OCI-LY7 (cell line): ENCODE measurements at regions of chr20 and their contacts with region 1.

Region 1: DNA sequence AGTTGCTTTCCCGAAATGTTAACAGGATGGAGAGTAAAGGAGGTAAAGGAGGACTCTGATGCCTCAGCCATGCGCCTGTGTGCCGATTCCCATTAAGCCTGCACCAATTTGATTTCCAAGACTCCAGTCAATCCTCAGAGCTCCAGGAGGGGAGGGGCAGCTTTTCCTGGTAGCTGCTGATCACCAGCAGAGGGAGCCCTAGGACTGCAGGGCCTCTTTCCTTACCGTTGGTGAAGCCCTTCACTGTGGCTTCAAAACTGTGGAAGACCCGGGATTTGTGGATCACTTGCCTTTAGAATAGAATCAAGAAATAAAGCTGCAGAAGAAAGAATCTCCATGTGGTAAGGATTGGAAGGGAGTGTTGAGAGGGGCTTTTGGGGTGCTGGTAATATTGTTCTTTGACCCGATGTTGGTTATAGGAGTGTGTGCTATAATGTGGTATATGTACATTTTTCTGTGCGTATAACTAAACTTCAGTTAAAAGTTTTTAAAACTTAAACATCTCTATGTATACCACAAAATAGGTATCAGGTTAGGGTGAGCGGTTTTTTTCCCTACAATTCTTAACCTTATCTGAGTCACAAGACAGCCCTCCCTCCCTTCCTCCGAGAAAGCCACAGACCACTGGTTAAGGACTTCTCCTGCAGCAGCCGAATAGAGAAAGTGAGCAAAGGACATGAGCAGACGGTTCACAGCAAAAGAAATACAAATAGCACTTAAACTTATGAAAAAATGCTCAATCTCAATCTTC is 6.9 kb upstream of the OSER1 start:
- DNase-seq: peak; percentile 68
- H3K4me3 ChIP-seq: no peak overlapping the region
- H3K27ac ChIP-seq: no peak overlapping the region
- H3K4me1 ChIP-seq: peaks cover 14% of the 10 kb centered on the region
- CTCF ChIP-seq: peak; percentile 97

Region 2: GRCh38 chr20:44310664-44311639 is 93.4 kb after region 1 on chr20 and contains the start of gene FITM2:
- CTCF ChIA-PET with region 1: interaction called, 16 read pairs
- POLR2A ChIA-PET with region 1: interaction called, 10 read pairs
- intact Hi-C with region 1: loop called (anchors 1 kb)
- DNase-seq: peak; percentile 95
- H3K4me3 ChIP-seq: peak within 1 kb of the TSS; percentile 81
- H3K27ac ChIP-seq: no peak within 1 kb of the TSS
- H3K4me1 ChIP-seq: peaks cover 7% of the 10 kb centered on the region
- CTCF ChIP-seq: peak; percentile 87
- total RNA-seq, gene FITM2: 1.7 and 2.3 TPM in 2 replicates

Region 3: DNA sequence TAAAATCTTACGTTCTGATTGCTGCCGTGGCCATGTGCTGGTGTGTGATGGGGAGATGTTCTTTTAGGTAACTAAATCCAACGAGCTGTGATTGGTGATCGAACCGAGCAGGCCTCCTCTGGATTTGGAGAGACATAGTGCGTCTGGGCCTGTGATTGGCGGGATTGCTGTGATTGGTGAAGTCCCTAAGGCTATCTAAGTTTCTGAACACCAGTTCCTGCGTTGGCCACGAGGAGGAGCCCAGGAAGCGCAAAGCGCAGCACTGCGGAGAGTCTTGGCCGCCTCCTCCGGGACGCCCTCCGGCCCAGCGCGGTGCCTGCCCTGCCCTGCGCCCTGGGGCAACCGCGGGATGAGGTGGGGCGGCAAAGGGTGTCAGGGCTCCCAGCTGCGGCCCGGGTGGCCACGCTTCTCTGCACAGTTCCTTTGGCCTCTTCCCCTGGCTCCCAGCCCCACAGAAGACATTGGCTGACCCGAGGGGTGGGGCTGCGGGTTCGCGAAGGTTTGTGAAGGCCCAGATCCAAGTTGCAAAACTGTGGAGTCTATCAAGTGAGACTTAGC is 171.0 kb after region 1 on chr20:
- CTCF ChIA-PET with region 1: interaction called, 8 read pairs
- POLR2A ChIA-PET with region 1: interaction called, 4 read pairs
- intact Hi-C with region 1: loop called (anchors 1 kb)
- DNase-seq: peak; percentile 62
- H3K4me3 ChIP-seq: no peak overlapping the region
- H3K27ac ChIP-seq: no peak overlapping the region
- H3K4me1 ChIP-seq: no peaks in the 10 kb centered on the region
- CTCF ChIP-seq: peak; percentile 81

Region 4: GRCh38 chr20:44460795-44461141 is 243.3 kb after region 1 on chr20:
- CTCF ChIA-PET with region 1: no interaction called
- POLR2A ChIA-PET with region 1: no interaction called
- intact Hi-C with region 1: loop called (anchors 1 kb)
- DNase-seq: peak; percentile 56
- H3K4me3 ChIP-seq: no peak overlapping the region
- H3K27ac ChIP-seq: no peak overlapping the region
- H3K4me1 ChIP-seq: no peaks in the 10 kb centered on the region
- CTCF ChIP-seq: peak; percentile 86